SK-N-SH (cell line): ENCODE measurements at regions of chr2 and their contacts with region 1.

Region 1: DNA sequence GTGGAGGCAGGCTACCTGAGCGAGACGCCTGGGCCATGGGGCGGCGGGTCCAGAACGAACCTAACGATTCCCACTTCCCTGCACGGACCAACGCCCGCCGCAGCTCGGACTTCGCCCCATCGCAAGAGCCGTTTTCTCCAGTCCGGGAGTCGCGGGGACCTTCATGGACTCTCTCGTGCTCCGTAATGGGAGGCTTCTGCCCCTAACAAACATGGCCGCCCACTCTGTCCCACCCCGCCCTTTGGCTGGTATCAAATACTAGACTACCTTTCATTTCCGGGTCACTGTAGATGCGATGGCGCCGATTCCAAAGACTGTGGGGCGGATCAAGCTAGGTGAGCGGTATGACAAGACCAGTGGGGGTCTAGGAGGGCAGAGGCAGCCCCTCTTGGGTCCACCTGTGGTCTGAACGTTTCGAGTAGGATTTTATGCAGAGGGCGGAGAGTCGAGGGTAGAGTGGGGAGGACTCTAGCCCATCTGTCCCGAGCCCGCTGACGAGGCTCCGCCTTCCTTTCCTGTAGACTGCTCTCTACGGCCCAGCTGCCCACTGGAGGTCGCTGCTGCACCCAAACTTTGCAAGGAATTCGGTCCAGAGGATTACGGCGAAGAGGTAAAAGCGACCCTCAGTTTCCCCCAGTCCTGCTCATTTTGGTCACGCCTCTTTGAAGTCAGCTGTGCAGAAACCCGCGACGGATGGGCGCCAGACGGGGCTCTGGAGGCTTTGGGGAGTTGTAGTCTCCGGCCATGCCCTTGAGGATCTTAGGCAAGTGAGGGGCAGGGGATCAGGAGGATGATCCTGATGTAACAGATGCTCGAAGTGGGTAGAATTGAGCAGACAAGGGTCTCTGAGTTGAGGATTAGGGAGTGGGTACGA is at the starts of genes CCDC142 and TTC31:
- DNase-seq: peak; percentile 93
- H3K4me3 ChIP-seq: peak within 1 kb of the TSS; percentile 70 to 97
- H3K27ac ChIP-seq: peak within 1 kb of the TSS; percentile 79 to 91
- H3K4me1 ChIP-seq: peaks cover 13 to 16% of the 10 kb centered on the region in 2 experiments; a peak in 3 of 4 replicates
- H3K27me3 ChIP-seq: no peaks in the 10 kb centered on the region
- CTCF ChIP-seq: peak; percentile 93
- EP300 ChIP-seq: no peak
- RAD21 ChIP-seq: peak; percentile 84
- polyA plus RNA-seq, gene CCDC142: 8.7 and 13.1 TPM in 2 replicates
- polyA plus RNA-seq, gene TTC31: 27.9 and 38.0 TPM in 2 replicates

Region 2: GRCh38 chr2:74421221-74421870 is 61.7 kb before region 1 on chr2 and contains the starts of genes C2orf81 and WDR54:
- CTCF ChIA-PET with region 1: no interaction called
- POLR2A ChIA-PET with region 1: interaction called, 16 read pairs
- DNase-seq: peak; percentile 98
- H3K4me3 ChIP-seq: peak within 1 kb of the TSS; percentile 87
- H3K27ac ChIP-seq: peak within 1 kb of the TSS; percentile 82 to 94
- H3K4me1 ChIP-seq: peaks cover 0 to 16% of the 10 kb centered on the region in 2 experiments; a peak in 1 of 4 replicates
- H3K27me3 ChIP-seq: no peaks in the 10 kb centered on the region
- CTCF ChIP-seq: no peak
- EP300 ChIP-seq: no peak; a peak in 1 of 4 replicates
- RAD21 ChIP-seq: no peak
- polyA plus RNA-seq, gene C2orf81: 1.2 and 2.5 TPM in 2 replicates
- polyA plus RNA-seq, gene WDR54: 50.7 and 61.6 TPM in 2 replicates

Region 3: DNA sequence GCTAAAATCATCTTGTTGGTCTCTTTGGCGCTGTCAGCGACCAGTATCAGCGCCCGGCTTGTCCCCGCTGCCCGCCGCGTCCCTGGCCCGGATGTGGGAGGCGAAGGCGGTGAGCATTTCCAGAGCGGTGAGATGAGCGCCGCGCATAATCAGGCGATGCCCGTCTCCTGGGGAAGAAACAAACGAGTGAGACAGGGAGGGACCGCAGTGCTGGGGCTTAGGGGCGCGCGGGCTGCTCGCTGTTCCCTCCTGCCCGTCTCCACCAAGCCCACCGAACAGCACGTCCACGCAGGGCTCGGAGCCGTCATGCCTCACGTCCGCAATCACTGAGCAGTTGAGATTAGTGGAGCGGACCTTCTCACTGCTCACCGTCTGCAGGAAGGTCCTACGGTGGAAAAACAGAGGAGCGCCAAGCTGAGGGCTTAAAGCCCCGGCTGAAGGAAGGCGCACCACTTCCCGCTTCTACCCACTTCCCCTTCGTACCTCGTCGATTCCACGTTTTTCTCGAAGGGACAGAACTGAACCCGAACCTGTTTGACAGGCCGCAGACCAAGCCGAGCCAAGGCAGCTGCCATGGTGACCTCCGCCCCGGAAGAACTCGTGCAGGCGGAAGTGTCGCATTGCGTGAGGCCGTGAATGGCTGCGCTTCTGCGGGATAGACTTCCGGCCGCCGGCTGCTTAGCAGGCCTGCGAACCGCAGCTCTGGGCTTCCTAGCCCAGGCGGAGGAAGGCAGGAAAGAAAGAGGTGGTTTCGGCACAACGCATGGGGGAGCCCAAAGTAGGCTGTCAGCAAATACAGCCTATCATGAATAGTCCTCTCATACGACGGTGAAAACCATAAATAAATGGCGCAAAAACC is 10.7 kb before region 1 on chr2 and contains the start of gene MRPL53:
- CTCF ChIA-PET with region 1: interaction called, 20 read pairs
- POLR2A ChIA-PET with region 1: interaction called, 24 read pairs
- DNase-seq: peak; percentile 85
- H3K4me3 ChIP-seq: peak within 1 kb of the TSS; percentile 68 to 74
- H3K27ac ChIP-seq: peak within 1 kb of the TSS; percentile 78 to 94
- H3K4me1 ChIP-seq: peaks cover 6 to 7% of the 10 kb centered on the region in 2 experiments; a peak in 2 of 4 replicates
- H3K27me3 ChIP-seq: no peaks in the 10 kb centered on the region
- CTCF ChIP-seq: no peak
- EP300 ChIP-seq: no peak
- RAD21 ChIP-seq: no peak
- polyA plus RNA-seq, gene MRPL53: 60.6 and 95.0 TPM in 2 replicates

Region 4: GRCh38 chr2:74507145-74507925 is 24.3 kb after region 1 on chr2 and contains the start of gene PCGF1:
- CTCF ChIA-PET with region 1: interaction called, 56 read pairs
- POLR2A ChIA-PET with region 1: interaction called, 8 read pairs
- DNase-seq: peak; percentile 97
- H3K4me3 ChIP-seq: peak within 1 kb of the TSS; percentile 84 to 86
- H3K27ac ChIP-seq: peak within 1 kb of the TSS; percentile 99 to 100
- H3K4me1 ChIP-seq: peaks cover 19 to 26% of the 10 kb centered on the region in 2 experiments; a peak in 3 of 4 replicates
- H3K27me3 ChIP-seq: no peaks in the 10 kb centered on the region
- CTCF ChIP-seq: peak; percentile 53
- EP300 ChIP-seq: no peak
- RAD21 ChIP-seq: peak; percentile 57
- polyA plus RNA-seq, gene PCGF1: 44.9 and 46.4 TPM in 2 replicates

Region 5: DNA sequence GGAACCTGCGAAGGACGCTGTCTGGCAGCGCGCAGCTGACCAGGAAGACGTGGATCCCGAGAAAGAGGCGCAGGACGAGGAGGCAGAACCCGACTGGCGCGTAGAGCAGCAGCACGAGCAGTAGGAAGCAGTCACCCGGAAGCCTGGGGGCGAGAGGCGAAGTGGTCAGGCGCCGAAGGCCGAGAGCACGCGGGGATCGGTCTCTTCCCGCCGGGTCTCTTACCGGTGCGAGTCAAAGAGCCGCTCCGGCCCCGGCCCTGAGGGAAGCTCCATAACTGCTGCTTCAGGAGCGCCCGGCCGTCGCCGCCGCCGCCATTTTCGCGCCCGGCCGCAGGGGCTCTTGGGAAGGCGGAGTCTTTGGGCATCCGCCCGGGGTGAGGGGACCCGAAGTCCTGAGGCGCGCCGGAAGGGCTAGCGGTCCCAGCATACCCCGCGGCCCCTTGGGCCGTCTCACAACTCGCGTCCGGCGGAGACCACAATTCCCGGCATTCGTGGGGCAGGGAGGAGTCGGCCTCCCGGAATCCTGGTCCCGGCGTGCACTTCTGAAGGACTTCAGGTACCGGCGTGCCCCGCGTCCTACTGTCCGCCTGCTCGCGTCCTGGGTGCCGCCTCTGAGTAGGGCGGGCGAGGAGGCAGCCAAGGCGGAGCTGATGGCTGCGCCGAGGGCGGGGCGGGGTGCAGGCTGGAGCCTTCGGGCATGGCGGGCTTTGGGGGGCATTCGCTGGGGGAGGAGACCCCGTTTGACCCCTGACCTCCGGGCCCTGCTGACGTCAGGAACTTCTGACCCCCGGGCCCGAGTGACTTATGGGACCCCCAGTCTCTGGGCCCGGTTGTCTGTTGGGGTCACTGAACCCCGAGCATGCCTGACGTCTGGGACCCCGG is 46.6 kb after region 1 on chr2 and contains the starts of genes AUP1 and HTRA2:
- CTCF ChIA-PET with region 1: interaction called, 102 read pairs
- POLR2A ChIA-PET with region 1: interaction called, 13 read pairs
- DNase-seq: peak; percentile 98
- H3K4me3 ChIP-seq: peak within 1 kb of the TSS; percentile 83 to 99
- H3K27ac ChIP-seq: peak within 1 kb of the TSS; percentile 68 to 92
- H3K4me1 ChIP-seq: peaks cover 13 to 24% of the 10 kb centered on the region in 2 experiments
- H3K27me3 ChIP-seq: no peaks in the 10 kb centered on the region
- CTCF ChIP-seq: no peak
- EP300 ChIP-seq: no peak
- RAD21 ChIP-seq: 0 out of 2 replicates have a peak, but pooled peaks have one; percentile 4
- polyA plus RNA-seq, gene AUP1: 118 and 151 TPM in 2 replicates
- polyA plus RNA-seq, gene HTRA2: 55.7 and 60.4 TPM in 2 replicates